Activated B cell treated with CpG ODN at 0.5 μM for 24 hours (primary cell): ENCODE measurements at regions of chr1 and their contacts with region 1.

Region 1: DNA sequence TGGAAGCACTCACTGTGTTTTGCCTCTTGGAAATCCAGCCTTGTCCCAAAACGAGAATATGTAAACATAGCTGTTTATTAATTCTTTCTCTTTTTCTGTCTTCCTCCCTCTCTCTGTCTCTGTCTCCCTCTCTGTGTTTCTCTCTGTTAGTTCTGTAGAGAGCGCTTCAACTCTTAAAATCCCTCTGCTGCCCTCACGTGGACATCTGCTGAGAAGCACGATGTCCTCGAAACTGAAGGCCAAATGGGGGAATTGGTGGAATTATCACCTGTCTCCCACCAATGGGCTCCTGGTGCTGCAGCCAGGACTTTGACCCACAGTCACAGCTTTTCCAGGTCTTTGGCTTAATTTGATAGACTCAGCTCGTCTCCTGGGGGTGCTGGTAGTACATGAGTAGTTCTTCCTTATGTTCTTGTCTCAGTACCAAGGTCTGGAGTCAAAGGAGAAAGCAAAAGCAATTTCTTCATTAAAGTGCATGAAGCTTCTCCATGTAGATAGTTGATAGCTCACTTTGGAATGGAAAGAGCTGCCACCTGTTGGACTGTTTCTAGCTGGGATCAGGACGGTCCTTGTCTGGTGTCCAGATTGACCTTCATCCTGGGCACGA is 5.5 kb upstream of the GBP6 start:
- DNase-seq: peak; percentile 61
- ATAC-seq: peak; percentile 87
- H3K4me3 Mint-ChIP-seq: no peak overlapping the region
- H3K27ac Mint-ChIP-seq: no peak overlapping the region
- H3K4me1 Mint-ChIP-seq: peaks cover 4% of the 10 kb centered on the region
- H3K27me3 Mint-ChIP-seq: no peaks in the 10 kb centered on the region
- CTCF ChIP-seq: peak; percentile 77

Region 2: GRCh38 chr1:88983791-88984559 is 374.4 kb before region 1 on chr1:
- CTCF ChIA-PET with region 1: interaction called, 6 read pairs
- POLR2A ChIA-PET with region 1: no interaction called
- intact Hi-C with region 1: loop called (anchors 1 kb)
- DNase-seq: no peak
- ATAC-seq: peak; percentile 84
- H3K4me3 Mint-ChIP-seq: peak overlapping the region; percentile 29
- H3K27ac Mint-ChIP-seq: peak overlapping the region; percentile 56
- H3K4me1 Mint-ChIP-seq: peaks cover 62% of the 10 kb centered on the region
- H3K27me3 Mint-ChIP-seq: no peaks in the 10 kb centered on the region
- CTCF ChIP-seq: no peak

Region 3: GRCh38 chr1:89065079-89065868 is 293.1 kb before region 1 on chr1 and contains the start of gene GBP1:
- CTCF ChIA-PET with region 1: interaction called, 3 read pairs
- POLR2A ChIA-PET with region 1: no interaction called
- intact Hi-C with region 1: loop called (anchors 1 kb)
- DNase-seq: no peak
- ATAC-seq: peak; percentile 72
- H3K4me3 Mint-ChIP-seq: peak within 1 kb of the TSS; percentile 90
- H3K27ac Mint-ChIP-seq: peak within 1 kb of the TSS; percentile 86
- H3K4me1 Mint-ChIP-seq: peaks cover 47% of the 10 kb centered on the region
- H3K27me3 Mint-ChIP-seq: no peaks in the 10 kb centered on the region
- CTCF ChIP-seq: no peak
- total RNA-seq, gene GBP1: 24.0 and 27.5 TPM in 2 replicates

Region 4: DNA sequence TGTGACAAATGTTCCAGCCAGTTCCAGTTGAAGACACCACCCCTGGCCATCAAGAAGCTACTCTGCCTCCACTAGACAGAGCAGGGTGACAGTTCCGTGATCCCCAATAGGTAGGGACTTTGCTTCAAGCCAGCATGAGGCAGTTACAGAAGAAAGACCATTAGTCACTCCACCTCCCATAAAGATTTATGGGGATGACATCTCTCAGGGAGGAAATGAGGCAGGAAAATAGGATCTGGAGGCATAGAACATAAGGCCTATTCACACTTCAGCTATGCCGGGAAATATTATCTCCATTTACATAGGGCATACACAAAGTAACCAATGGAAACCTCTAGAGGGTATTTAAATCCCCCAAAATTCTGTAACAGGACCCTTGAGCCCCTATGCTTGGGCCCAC is 179.0 kb before region 1 on chr1:
- CTCF ChIA-PET with region 1: no interaction called
- POLR2A ChIA-PET with region 1: no interaction called
- intact Hi-C with region 1: loop called (anchors 1 kb)
- DNase-seq: no peak
- ATAC-seq: no peak
- H3K4me3 Mint-ChIP-seq: no peak overlapping the region
- H3K27ac Mint-ChIP-seq: no peak overlapping the region
- H3K4me1 Mint-ChIP-seq: no peaks in the 10 kb centered on the region
- H3K27me3 Mint-ChIP-seq: no peaks in the 10 kb centered on the region
- CTCF ChIP-seq: no peak

Region 5: GRCh38 chr1:89274411-89274857 is 84.0 kb before region 1 on chr1:
- CTCF ChIA-PET with region 1: interaction called, 6 read pairs
- POLR2A ChIA-PET with region 1: no interaction called
- intact Hi-C with region 1: loop called (anchors 5 kb)
- DNase-seq: no peak
- ATAC-seq: peak; percentile 25
- H3K4me3 Mint-ChIP-seq: peak overlapping the region; percentile 71
- H3K27ac Mint-ChIP-seq: peak overlapping the region; percentile 86
- H3K4me1 Mint-ChIP-seq: peaks cover 62% of the 10 kb centered on the region
- H3K27me3 Mint-ChIP-seq: no peaks in the 10 kb centered on the region
- CTCF ChIP-seq: no peak